PC-9 (cell line): ENCODE measurements at regions of chr1 and their contacts with region 1.

Region 1: GRCh38 chr1:152001391-152002249 is 8.0 kb upstream of the S100A10 start:
- DNase-seq: peak; percentile 87 to 93
- H3K4me3 ChIP-seq: no peak overlapping the region
- H3K27ac ChIP-seq: peak overlapping the region; percentile 90
- H3K4me1 ChIP-seq: peaks cover 57% of the 10 kb centered on the region
- H3K27me3 ChIP-seq: no peaks in the 10 kb centered on the region
- CTCF ChIP-seq: peak; percentile 94

Region 2: DNA sequence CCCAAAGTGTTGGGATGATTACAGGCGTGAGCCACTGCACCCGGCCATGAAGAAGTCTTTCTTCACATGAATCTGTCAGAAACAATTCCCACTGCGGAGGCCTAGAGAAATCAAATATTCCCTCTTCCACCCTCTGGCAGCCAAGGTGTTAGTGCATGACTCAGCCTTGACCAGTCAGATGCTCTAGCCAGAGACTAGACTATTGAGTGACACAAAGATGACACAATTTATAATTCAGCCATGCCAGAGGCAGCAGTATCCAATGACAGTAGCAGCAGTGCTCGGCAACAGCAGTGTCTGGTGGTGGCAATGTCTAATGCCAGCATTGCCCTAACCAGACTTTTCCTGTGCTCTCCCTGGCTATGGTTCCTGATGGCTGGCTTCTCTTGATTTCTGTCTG is 1106.0 kb before region 1 on chr1:
- CTCF ChIA-PET with region 1: no interaction called
- POLR2A ChIA-PET with region 1: no interaction called
- intact Hi-C with region 1: no loop called
- DNase-seq: peak; percentile 48 to 78
- H3K4me3 ChIP-seq: no peak overlapping the region
- H3K27ac ChIP-seq: no peak overlapping the region
- H3K4me1 ChIP-seq: peaks cover 5% of the 10 kb centered on the region; the same call in 1 of the 2 replicates
- H3K27me3 ChIP-seq: no peaks in the 10 kb centered on the region
- CTCF ChIP-seq: no peak

Region 3: DNA sequence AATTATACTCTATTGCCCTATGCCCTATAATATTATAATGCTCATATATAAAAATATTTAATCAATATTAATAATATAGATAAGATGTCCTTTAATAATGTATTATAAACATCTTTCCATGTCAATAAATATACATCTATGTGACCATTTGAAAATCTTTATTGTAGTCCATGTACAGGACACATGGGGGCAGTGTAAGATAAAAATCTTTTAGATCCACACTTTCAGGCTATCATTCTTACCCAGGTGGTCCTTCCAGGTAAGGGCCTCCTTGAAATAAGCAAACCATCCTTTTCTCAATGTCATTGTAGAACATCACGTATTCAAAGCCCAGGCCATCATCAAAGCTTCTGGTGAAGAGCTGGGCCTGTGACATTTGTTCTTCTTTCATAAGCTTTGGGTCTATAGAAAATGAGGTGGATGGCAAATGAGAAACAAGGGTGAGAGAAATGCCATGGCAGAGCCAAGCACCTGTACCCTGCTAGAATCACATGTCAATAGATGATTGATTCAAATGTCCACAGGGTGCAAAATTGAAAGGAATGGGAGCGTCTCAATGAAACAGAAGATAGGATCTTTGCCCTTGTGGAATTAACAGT is 112.5 kb before region 1 on chr1:
- CTCF ChIA-PET with region 1: no interaction called
- POLR2A ChIA-PET with region 1: interaction called, 12 read pairs
- intact Hi-C with region 1: loop called (anchors 1 kb)
- DNase-seq: peak in 1 of 2 experiments; percentile 38
- H3K4me3 ChIP-seq: no peak overlapping the region
- H3K27ac ChIP-seq: no peak overlapping the region
- H3K4me1 ChIP-seq: peaks cover 20% of the 10 kb centered on the region
- H3K27me3 ChIP-seq: no peaks in the 10 kb centered on the region
- CTCF ChIP-seq: peak; percentile 69

Region 4: GRCh38 chr1:151934048-151934493 is 67.5 kb before region 1 on chr1:
- CTCF ChIA-PET with region 1: interaction called, 6 read pairs
- POLR2A ChIA-PET with region 1: interaction called, 5 read pairs
- intact Hi-C with region 1: loop called (anchors 1 kb)
- DNase-seq: peak; percentile 54 to 58
- H3K4me3 ChIP-seq: no peak overlapping the region
- H3K27ac ChIP-seq: no peak overlapping the region
- H3K4me1 ChIP-seq: peaks cover 12% of the 10 kb centered on the region; the same call in 1 of the 2 replicates
- H3K27me3 ChIP-seq: no peaks in the 10 kb centered on the region
- CTCF ChIP-seq: peak; percentile 89

Region 5: DNA sequence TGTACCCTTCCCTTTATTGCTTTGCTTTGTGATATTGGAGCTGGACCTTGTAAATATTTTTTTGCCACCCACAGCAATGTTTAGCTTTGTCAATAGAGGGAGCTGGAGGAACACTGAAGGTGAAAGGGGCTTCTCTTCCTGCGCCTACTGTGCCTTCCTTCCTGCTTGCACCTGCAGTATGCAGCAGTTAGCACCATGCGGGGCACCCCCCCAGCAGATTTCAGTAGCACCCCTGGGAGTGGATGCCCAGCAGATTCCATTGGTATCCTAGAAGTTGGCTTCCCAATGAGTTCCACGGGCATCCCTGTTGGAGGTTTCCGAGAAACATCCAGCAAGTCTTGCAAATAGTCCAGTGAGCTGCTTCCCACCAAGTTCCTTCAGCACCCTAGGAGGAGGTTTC is 33.6 kb before region 1 on chr1:
- CTCF ChIA-PET with region 1: interaction called, 25 read pairs
- POLR2A ChIA-PET with region 1: interaction called, 6 read pairs
- intact Hi-C with region 1: loop called (anchors 1 kb)
- DNase-seq: peak in 1 of 2 experiments; percentile 51
- H3K4me3 ChIP-seq: no peak overlapping the region
- H3K27ac ChIP-seq: no peak overlapping the region
- H3K4me1 ChIP-seq: peaks cover 60% of the 10 kb centered on the region
- H3K27me3 ChIP-seq: no peaks in the 10 kb centered on the region
- CTCF ChIP-seq: peak; percentile 70

Region 6: DNA sequence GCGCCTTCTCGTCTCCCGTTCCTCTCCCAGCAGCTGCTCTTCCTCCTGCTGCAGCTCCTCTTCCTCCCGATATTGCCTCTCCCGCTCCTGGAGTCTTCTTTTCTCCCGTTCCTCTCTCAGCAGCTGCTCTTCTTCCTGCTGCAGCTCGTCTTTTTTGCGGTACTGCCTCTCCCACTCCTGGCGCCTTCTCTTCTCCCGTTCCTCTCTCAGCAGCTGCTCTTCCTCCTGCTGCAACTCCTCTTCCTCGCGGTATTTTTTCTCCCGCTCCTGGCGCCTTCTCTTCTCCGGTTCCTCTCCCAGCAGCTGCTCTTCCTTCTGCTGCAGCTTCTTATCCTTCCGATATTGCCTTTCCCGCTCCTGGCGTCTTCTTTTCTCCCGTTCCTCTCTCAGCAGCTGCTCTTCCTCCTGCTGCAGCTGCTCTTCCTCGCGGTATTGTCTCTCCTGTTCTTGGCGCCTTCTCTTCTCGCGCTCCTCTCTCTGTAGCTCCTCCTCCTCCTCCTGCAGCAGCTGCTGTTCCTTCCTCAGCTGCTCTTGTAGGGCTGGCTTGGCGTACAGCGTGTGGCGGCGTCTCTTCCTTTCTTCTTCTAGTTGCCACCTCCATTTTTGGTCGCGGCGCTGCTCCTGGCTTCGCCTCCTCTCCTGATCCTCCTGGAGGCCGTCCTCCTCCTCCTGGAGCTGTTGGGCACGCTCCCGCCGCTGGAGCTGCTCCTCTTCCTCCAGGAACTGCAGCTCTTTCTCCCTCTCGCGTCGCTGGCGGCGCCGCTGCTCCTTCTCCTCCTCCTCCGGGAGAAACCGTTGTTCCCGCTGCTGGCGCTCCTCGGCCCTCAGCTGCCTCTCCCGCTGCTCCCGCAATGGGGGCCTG is 108.6 kb after region 1 on chr1:
- CTCF ChIA-PET with region 1: no interaction called
- POLR2A ChIA-PET with region 1: interaction called, 19 read pairs
- intact Hi-C with region 1: no loop called
- DNase-seq: peak; percentile 38 to 58
- H3K4me3 ChIP-seq: peak overlapping the region; percentile 79
- H3K27ac ChIP-seq: no peak overlapping the region
- H3K4me1 ChIP-seq: peaks cover 15% of the 10 kb centered on the region; the same call in 1 of the 2 replicates
- H3K27me3 ChIP-seq: peaks cover 42% of the 10 kb centered on the region
- CTCF ChIP-seq: no peak